Heart right ventricle (tissue), 16 donors: ENCODE measurements at regions of chr1 and their contacts with region 1.

Region 1: GRCh38 chr1:21937372-21938221 is 487 bp upstream of the HSPG2 start:
- DNase-seq: peak; percentile 85 to 92
- ATAC-seq: peak; percentile 53 to 86 (median 72)
- H3K4me3 ChIP-seq: peak overlapping the region in 9 of 10 donors; percentile 36 to 60 (median 50)
- H3K27ac ChIP-seq: peak overlapping the region; percentile 75 to 90 (median 84)
- H3K4me1 ChIP-seq: peaks cover 31 to 89% (median 65%) of the 10 kb centered on the region in 9 donors
- H3K27me3 ChIP-seq: peaks cover 0 to 9% (median 0%) of the 10 kb centered on the region in 7 donors
- CTCF ChIP-seq: no peak

Region 2: GRCh38 chr1:21896652-21897532 is 40.7 kb before region 1 on chr1:
- intact Hi-C with region 1: loop called in 7 of 10 experiments (anchors 2 to 5 kb)
- DNase-seq: peak; percentile 81 to 86
- ATAC-seq: peak; percentile 63 to 86 (median 76)
- H3K4me3 ChIP-seq: no peak overlapping the region
- H3K27ac ChIP-seq: peak overlapping the region; percentile 75 to 99 (median 91)
- H3K4me1 ChIP-seq: peaks cover 55 to 98% (median 90%) of the 10 kb centered on the region in 9 donors
- H3K27me3 ChIP-seq: no peaks in the 10 kb centered on the region
- CTCF ChIP-seq: no peak

Region 3: DNA sequence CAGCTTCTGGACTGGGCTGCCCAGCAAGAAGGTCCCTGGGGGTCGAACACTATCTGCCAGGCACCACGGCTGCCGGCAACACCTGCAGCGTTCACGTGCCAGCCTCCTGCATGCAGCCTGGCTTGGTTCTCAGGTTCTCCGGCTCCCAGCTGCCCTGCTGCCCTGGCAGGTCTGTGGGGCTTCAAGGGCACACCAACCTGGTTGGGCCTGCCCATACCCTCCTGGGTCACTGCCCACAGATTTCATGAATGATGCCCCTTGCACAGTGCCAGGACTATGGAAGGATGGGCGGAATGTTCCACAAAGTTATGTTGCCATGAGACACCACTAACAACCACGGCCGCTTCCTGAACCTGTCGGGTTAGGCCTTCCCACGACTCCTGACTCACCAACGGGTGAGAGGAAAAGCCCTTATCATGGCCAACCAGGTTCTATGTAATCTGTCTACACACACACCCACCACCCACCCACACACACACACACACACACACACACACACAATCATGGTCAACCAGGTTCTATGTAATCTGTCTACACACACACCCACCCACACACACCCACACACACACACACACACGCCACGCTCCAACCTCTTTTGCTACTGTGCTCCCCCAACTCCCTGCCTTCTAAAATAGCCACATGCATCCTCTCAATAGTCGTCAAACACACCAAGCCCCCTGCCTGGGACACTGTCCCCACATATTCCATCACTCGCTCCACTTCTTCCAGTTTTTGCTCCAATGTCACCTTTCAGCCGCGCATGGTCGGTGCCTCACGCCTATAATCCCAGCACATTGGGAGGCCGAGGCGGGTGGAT is 32.7 kb before region 1 on chr1:
- intact Hi-C with region 1: loop called in 5 of 10 experiments (anchors 2 to 5 kb)
- DNase-seq: peak; percentile 59 to 72
- ATAC-seq: peak in 7 of 8 donors; percentile 6 to 69 (median 31)
- H3K4me3 ChIP-seq: no peak overlapping the region
- H3K27ac ChIP-seq: peak overlapping the region; percentile 76 to 99 (median 92)
- H3K4me1 ChIP-seq: peaks cover 85 to 100% (median 98%) of the 10 kb centered on the region in 9 donors
- H3K27me3 ChIP-seq: no peaks in the 10 kb centered on the region
- CTCF ChIP-seq: no peak

Region 4: DNA sequence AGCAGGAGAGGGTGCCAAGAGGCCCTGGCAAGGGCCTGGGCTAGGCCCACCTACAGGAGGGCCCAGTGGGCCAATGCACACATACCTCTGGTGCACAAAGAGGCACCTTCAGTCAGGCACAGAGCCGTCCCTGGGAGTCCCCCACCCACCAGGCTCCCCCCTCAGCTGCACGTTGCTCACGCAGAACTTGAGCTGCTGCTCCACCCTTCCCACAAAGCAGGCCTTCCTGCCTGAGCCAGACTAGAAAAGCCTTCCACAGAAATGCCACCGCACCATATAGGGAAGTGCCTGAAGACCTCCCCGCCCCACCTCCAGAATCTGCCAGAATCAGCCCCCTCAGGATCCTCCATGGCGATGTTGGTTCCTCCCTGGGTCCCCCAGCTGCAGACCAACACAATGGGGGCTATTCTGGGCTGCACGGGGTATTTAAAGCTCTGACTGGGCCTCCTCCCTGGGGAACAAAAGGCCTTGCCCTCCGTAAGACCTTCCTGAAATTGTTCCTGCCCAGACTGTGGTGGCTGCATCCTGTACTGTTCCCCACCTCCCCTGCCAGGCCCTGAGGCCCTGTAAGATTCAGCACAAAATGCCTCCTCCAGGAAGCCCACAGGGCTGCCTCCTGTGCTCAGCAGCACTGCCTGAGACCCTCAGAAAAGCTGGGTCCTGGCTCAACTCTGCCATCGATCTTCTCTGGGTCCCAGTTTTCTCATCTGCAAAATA is 27.7 kb before region 1 on chr1:
- intact Hi-C with region 1: loop called in 4 of 10 experiments (anchors 2 kb)
- DNase-seq: peak; percentile 75 to 88
- ATAC-seq: peak; percentile 41 to 75 (median 60)
- H3K4me3 ChIP-seq: peak overlapping the region in 3 of 10 donors; percentile 0 to 10 (median 5)
- H3K27ac ChIP-seq: peak overlapping the region; percentile 84 to 99 (median 92)
- H3K4me1 ChIP-seq: peaks cover 88 to 100% (median 98%) of the 10 kb centered on the region in 9 donors
- H3K27me3 ChIP-seq: no peaks in the 10 kb centered on the region
- CTCF ChIP-seq: no peak